ENCODE measurements at regions of chr3 and their contacts with region 1.

Region 1: DNA sequence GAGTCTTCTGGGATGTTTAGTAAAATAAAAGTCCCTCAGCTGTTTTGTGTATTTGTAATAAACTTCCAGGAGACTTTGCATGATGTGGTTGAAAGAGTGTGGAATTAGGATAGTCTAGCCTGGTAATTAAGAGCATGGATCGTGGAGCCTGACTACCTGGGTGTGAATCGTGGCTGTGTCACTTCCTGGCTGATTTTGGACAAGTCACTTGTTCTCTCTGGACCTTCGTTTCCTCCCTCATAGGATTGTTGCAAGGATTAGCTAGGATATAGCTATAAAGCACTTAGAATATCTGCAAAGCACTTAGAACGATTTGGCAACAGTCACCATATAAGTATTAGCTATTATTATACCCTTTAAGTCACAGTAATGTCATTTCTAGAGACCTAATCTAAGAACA is 40.2 kb downstream of the SLMAP start:
- DNase-seq: no peak
- ATAC-seq: no peak
- H3K4me3 ChIP-seq: no peak overlapping the region
- H3K27ac ChIP-seq: no peak overlapping the region
- H3K4me1 ChIP-seq: peaks cover 12% of the 10 kb centered on the region
- H3K27me3 ChIP-seq: no peaks in the 10 kb centered on the region
- CTCF ChIP-seq: no peak
- EP300 ChIP-seq: no peak
- POLR2A ChIP-seq: no peak
- RAD21 ChIP-seq: no peak

Region 2: DNA sequence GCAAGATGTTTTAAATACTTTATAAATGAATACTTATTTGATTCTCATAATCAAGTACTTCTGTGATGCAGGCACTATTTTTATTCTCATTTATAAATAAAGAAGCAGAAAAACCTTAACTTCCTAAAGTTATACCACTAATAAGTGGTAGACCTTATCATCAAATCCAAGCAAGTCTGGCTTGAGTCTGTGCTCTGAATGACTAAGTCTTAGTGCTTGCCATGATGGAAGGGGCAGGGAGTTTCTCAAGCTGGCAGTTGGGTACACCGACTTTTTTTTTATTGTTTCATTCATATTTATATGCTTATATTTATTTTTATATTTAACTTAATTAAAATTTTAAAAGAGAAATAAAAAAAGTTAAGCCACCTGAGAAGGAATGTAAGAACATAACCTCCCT is 16.6 kb before region 1 on chr3:
- CTCF ChIA-PET with region 1: interaction called, 4 read pairs
- POLR2A ChIA-PET with region 1: interaction called, 4 read pairs
- RAD21 ChIA-PET with region 1: interaction called, 4 read pairs
- SMC1A ChIA-PET with region 1: interaction called, 39 read pairs
- in situ Hi-C with region 1: no loop called
- intact Hi-C with region 1: no loop called
- DNase-seq: no peak
- ATAC-seq: no peak
- H3K4me3 ChIP-seq: no peak overlapping the region
- H3K27ac ChIP-seq: no peak overlapping the region
- H3K4me1 ChIP-seq: no peaks in the 10 kb centered on the region
- H3K27me3 ChIP-seq: no peaks in the 10 kb centered on the region
- CTCF ChIP-seq: no peak
- EP300 ChIP-seq: no peak
- POLR2A ChIP-seq: no peak
- RAD21 ChIP-seq: no peak

Region 3: GRCh38 chr3:57961828-57962447 is 165.7 kb after region 1 on chr3:
- CTCF ChIA-PET with region 1: no interaction called
- POLR2A ChIA-PET with region 1: no interaction called
- RAD21 ChIA-PET with region 1: no interaction called
- SMC1A ChIA-PET with region 1: no interaction called
- in situ Hi-C with region 1: no loop called
- intact Hi-C with region 1: no loop called
- DNase-seq: no peak
- ATAC-seq: peak; percentile 57
- H3K4me3 ChIP-seq: no peak overlapping the region
- H3K27ac ChIP-seq: no peak overlapping the region
- H3K4me1 ChIP-seq: peaks cover 14% of the 10 kb centered on the region
- H3K27me3 ChIP-seq: no peaks in the 10 kb centered on the region
- CTCF ChIP-seq: peak; percentile 28 to 49 (median 40); a peak in 4 of 6 replicates
- EP300 ChIP-seq: no peak
- POLR2A ChIP-seq: no peak
- RAD21 ChIP-seq: peak; percentile 61